Prostate gland (tissue), 2 donors: ENCODE measurements at regions of chr12 and their contacts with region 1.

Region 1: GRCh38 chr12:26126340-26127284 is 1.8 kb upstream of the BHLHE41 start:
- DNase-seq: peak; percentile 87
- H3K4me3 ChIP-seq: peak overlapping the region; percentile 52 to 60
- H3K27ac ChIP-seq: peak overlapping the region; percentile 92 to 93
- H3K4me1 ChIP-seq: no peaks in the 10 kb centered on the region
- H3K27me3 ChIP-seq: no peaks in the 10 kb centered on the region
- CTCF ChIP-seq: peak in 2 of 4 experiments; percentile 23 to 40
- POLR2A ChIP-seq: peak; percentile 55

Region 2: GRCh38 chr12:26017484-26018206 is 109.0 kb before region 1 on chr12:
- intact Hi-C with region 1: no loop called
- DNase-seq: no peak
- H3K4me3 ChIP-seq: no peak overlapping the region
- H3K27ac ChIP-seq: no peak overlapping the region
- H3K4me1 ChIP-seq: no peaks in the 10 kb centered on the region
- H3K27me3 ChIP-seq: no peaks in the 10 kb centered on the region
- CTCF ChIP-seq: peak in 3 of 4 experiments; percentile 16 to 37 (median 31)
- POLR2A ChIP-seq: no peak

Region 3: DNA sequence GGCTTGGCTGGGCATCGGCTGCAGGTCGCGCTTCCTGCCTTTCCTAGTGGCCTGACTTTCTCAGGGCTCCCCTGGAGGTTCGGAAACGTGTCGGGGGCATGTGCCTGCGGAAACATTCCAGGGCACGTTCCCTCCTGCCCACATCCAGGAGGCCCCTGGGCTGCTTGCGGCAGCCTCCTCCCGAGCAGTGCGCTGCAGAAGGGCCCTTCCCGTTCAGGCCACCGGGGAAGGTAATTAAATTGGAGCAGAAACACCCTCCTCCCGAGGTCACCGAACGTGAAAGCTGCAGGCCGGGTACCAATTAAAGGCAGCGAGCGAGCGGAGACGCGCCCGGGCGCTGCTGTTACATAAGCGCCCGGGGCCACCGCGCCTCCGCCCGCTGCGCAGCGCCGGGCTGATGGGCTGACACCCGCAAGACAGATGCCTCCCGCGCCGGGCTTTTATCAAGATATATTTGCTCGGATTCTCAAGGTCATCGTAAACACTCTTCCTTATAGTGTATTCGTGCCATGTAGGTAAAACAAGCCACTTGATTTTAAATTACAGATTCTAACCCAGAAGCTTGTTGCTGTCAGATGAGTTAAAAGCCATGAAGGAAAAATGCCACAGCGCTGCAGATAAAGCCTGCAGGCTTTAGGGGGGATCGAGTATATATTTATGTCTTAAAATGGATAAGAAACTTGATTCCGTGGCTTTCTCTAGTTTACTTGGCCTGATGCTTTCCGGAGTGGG is 100.2 kb after region 1 on chr12:
- intact Hi-C with region 1: no loop called
- DNase-seq: peak; percentile 51
- H3K4me3 ChIP-seq: peak overlapping the region; percentile 22 to 30
- H3K27ac ChIP-seq: peak overlapping the region; percentile 48 to 61
- H3K4me1 ChIP-seq: no peaks in the 10 kb centered on the region
- H3K27me3 ChIP-seq: no peaks in the 10 kb centered on the region
- CTCF ChIP-seq: peak in 2 of 4 experiments; percentile 15 to 18
- POLR2A ChIP-seq: peak; percentile 32

Region 4: GRCh38 chr12:26274441-26275312 is 148.1 kb after region 1 on chr12:
- intact Hi-C with region 1: loop called (anchors 5 kb)
- DNase-seq: peak; percentile 85
- H3K4me3 ChIP-seq: no peak overlapping the region
- H3K27ac ChIP-seq: peak overlapping the region; percentile 74 to 80
- H3K4me1 ChIP-seq: peaks cover 5% of the 10 kb centered on the region
- H3K27me3 ChIP-seq: no peaks in the 10 kb centered on the region
- CTCF ChIP-seq: peak in 1 of 4 experiments; percentile 8
- POLR2A ChIP-seq: no peak

Region 5: DNA sequence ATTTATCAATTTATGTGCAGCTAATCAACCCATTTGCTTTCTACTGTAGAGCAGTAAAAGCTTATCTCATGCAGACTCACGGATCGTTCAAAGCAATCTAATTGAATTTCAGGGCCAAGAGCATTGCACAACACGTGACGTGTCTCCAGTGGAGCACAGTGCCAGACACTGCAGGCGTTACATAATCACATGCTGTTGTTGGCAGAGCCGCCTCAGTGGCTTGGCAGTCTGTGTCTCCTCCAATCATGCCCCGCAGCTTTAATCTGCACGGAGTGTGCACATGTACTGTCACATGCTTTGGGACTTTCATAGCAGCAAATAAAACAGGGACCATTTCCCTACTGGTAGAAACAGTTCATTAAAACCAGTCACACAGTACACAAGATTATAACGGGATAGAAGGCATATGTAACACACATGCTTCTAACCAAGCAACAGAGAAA is 397.1 kb after region 1 on chr12:
- intact Hi-C with region 1: loop called (anchors 10 kb)
- DNase-seq: peak; percentile 87
- H3K4me3 ChIP-seq: no peak overlapping the region
- H3K27ac ChIP-seq: peak overlapping the region in 1 of 2 donors; percentile 28
- H3K4me1 ChIP-seq: no peaks in the 10 kb centered on the region
- H3K27me3 ChIP-seq: no peaks in the 10 kb centered on the region
- CTCF ChIP-seq: peak in 2 of 4 experiments; percentile 20 to 28
- POLR2A ChIP-seq: no peak